Mammary epithelial cell (primary cell): ENCODE measurements at regions of chr4 and their contacts with region 1.

Region 1: DNA sequence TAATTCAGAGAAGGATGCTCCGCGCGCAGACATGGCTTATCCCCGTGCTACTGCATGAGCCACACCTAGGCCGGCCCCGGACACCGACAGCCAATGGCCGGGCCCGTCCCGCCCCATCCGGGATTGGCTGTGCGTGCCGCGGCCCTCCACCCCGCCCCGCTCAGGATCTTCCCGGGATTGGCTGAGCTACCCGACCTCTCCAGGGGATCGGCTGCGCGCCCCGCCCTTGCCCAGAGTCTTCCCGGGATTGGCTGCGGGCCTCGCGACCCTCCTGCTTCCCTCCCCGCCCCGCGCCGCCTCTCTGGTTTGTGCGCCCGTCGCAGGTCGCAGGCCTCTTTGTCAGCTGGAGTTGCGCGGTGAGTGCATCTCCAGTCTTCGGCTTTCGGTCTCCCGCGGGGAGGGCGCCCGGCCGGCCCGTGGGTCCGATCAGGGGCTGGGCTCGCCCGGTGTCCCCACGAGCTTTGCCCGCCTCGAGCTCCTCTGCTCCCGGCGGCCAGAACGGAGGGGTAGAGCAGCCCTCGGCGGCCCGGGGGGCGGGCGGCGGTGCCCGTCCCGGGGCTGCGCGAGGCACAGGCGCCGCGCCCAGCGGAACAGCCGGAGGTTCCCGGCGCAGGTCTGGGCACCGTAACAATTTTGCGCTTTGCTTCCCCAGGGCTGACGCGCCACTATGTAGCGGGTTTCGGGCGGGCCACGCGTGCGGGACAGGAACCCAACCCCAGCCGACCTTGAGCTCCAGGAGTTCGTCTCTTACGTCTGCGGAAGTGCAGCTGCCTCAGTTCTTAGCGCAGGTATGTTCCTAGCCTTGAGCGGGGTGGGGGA is 38.8 kb downstream of the ERVMER34-1 start:
- DNase-seq: peak; percentile 97
- H3K4me3 ChIP-seq: peak overlapping the region; percentile 80 to 85 (median 82)
- H3K27ac ChIP-seq: peak overlapping the region; percentile 84
- H3K4me1 ChIP-seq: peaks cover 31% of the 10 kb centered on the region
- H3K27me3 ChIP-seq: no peaks in the 10 kb centered on the region
- CTCF ChIP-seq: no peak

Region 2: GRCh38 chr4:52234561-52235440 is 477.6 kb before region 1 on chr4:
- CTCF ChIA-PET with region 1: no interaction called
- dilution Hi-C with region 1: no loop called
- in situ Hi-C with region 1: no loop called
- intact Hi-C with region 1: loop called (anchors 1 kb)
- DNase-seq: peak; percentile 41
- H3K4me3 ChIP-seq: no peak overlapping the region
- H3K27ac ChIP-seq: no peak overlapping the region
- H3K4me1 ChIP-seq: no peaks in the 10 kb centered on the region
- H3K27me3 ChIP-seq: peaks cover 5% of the 10 kb centered on the region
- CTCF ChIP-seq: peak; percentile 58 to 68

Region 3: GRCh38 chr4:52588097-52588782 is 124.1 kb before region 1 on chr4:
- CTCF ChIA-PET with region 1: no interaction called
- dilution Hi-C with region 1: no loop called
- in situ Hi-C with region 1: no loop called
- intact Hi-C with region 1: loop called (anchors 2 kb)
- DNase-seq: no peak
- H3K4me3 ChIP-seq: no peak overlapping the region
- H3K27ac ChIP-seq: peak overlapping the region; percentile 25
- H3K4me1 ChIP-seq: peaks cover 19% of the 10 kb centered on the region
- H3K27me3 ChIP-seq: no peaks in the 10 kb centered on the region
- CTCF ChIP-seq: peak; percentile 39 to 45

Region 4: DNA sequence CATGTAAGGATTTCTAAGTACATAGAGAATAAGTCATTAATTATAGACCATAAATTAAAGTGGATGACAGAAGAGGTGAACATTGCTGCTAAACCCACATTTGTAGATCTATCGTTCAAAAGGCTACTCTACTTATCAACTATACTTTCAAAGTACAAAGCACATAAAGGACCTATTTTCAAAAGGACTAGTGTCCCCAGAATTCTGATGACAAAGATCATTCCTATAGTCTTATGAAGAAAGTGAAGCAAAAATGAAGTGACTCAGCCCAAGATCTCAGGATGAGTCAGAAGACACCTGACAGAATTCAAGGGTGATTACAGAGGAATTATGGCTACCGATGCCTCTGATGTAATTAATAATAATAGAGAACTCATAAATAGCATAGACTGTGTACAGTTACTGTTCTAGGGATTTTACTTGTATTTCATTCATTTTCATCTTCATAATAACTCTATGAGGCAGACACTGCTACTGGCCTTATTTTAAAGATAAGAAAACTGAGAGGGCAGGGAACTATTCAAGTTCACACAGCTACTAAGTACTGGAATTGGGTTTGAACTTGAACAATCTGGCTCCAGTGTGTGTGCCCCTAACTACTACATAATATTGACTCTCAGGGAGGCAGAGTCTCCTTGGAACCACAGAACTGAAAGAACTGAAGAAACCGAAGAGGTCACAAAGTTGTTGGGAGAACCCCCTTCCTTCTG is 70.4 kb before region 1 on chr4:
- CTCF ChIA-PET with region 1: no interaction called
- dilution Hi-C with region 1: no loop called
- in situ Hi-C with region 1: no loop called
- intact Hi-C with region 1: loop called (anchors 1 kb)
- DNase-seq: peak; percentile 81
- H3K4me3 ChIP-seq: no peak overlapping the region
- H3K27ac ChIP-seq: peak overlapping the region; percentile 57
- H3K4me1 ChIP-seq: peaks cover 24% of the 10 kb centered on the region
- H3K27me3 ChIP-seq: no peaks in the 10 kb centered on the region
- CTCF ChIP-seq: no peak

Region 5: GRCh38 chr4:52780206-52780605 is 67.8 kb after region 1 on chr4:
- CTCF ChIA-PET with region 1: no interaction called
- dilution Hi-C with region 1: no loop called
- in situ Hi-C with region 1: no loop called
- intact Hi-C with region 1: no loop called
- DNase-seq: no peak
- H3K4me3 ChIP-seq: no peak overlapping the region
- H3K27ac ChIP-seq: no peak overlapping the region
- H3K4me1 ChIP-seq: peaks cover 10% of the 10 kb centered on the region
- H3K27me3 ChIP-seq: no peaks in the 10 kb centered on the region
- CTCF ChIP-seq: no peak

Region 6: GRCh38 chr4:52837726-52838558 is 125.6 kb after region 1 on chr4:
- CTCF ChIA-PET with region 1: no interaction called
- dilution Hi-C with region 1: no loop called
- in situ Hi-C with region 1: no loop called
- intact Hi-C with region 1: loop called (anchors 5 kb)
- DNase-seq: peak; percentile 97
- H3K4me3 ChIP-seq: peak overlapping the region; percentile 9 to 32 (median 9)
- H3K27ac ChIP-seq: peak overlapping the region; percentile 99
- H3K4me1 ChIP-seq: peaks cover 57% of the 10 kb centered on the region
- H3K27me3 ChIP-seq: no peaks in the 10 kb centered on the region
- CTCF ChIP-seq: no peak